ENCODE measurements at regions of chr11 and their contacts with region 1.

Region 1: GRCh38 chr11:108222686-108223448 is at the start of gene ATM:
- DNase-seq: peak; percentile 98
- H3K4me3 Mint-ChIP-seq: no peak within 1 kb of the TSS
- H3K27ac Mint-ChIP-seq: no peak within 1 kb of the TSS
- H3K4me1 Mint-ChIP-seq: peaks cover 35% of the 10 kb centered on the region
- H3K27me3 Mint-ChIP-seq: no peaks in the 10 kb centered on the region
- total RNA-seq, gene ATM: 37.3 and 39.7 TPM in 2 replicates

Region 2: DNA sequence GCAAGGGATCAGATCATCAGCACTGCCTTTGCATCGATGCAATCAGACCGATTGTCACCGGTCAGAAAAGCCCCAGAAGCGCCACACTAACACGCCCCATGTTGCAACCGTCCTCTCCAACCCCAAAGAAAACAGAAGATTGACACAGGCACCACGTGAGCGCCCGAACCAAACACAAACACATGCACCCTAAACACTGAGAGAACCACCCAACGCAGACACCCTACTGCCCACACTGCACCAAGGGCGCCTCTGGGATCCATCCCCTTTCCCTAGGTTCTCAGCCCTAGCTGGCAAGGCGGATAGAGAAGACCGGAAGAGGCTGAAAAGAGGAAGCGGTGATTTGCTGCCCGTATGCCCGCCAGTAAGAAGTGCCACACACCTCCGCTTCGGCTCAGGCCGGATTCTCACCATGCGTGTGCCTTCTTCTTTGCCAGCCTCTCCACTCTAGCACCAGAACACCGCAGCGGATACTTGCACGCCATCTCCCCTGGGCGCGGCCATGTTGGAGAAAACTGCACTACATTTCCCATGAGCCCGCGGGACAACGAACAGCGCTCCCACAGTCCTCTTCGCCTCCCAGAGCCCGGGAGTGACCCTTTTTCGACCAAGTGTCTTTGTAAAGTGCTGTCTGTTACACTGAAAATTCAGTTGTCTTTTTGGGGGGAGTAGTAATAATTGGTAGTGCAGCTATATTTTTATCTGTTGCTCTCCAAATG is 657.5 kb before region 1 on chr11 and contains the start of gene ALKBH8:
- intact Hi-C with region 1: loop called (anchors 10 kb)
- DNase-seq: peak; percentile 71
- H3K4me3 Mint-ChIP-seq: peak within 1 kb of the TSS; percentile 99
- H3K27ac Mint-ChIP-seq: peak within 1 kb of the TSS; percentile 98
- H3K4me1 Mint-ChIP-seq: peaks cover 52% of the 10 kb centered on the region
- H3K27me3 Mint-ChIP-seq: no peaks in the 10 kb centered on the region
- total RNA-seq, gene ALKBH8: 14.7 and 16.0 TPM in 2 replicates

Region 3: DNA sequence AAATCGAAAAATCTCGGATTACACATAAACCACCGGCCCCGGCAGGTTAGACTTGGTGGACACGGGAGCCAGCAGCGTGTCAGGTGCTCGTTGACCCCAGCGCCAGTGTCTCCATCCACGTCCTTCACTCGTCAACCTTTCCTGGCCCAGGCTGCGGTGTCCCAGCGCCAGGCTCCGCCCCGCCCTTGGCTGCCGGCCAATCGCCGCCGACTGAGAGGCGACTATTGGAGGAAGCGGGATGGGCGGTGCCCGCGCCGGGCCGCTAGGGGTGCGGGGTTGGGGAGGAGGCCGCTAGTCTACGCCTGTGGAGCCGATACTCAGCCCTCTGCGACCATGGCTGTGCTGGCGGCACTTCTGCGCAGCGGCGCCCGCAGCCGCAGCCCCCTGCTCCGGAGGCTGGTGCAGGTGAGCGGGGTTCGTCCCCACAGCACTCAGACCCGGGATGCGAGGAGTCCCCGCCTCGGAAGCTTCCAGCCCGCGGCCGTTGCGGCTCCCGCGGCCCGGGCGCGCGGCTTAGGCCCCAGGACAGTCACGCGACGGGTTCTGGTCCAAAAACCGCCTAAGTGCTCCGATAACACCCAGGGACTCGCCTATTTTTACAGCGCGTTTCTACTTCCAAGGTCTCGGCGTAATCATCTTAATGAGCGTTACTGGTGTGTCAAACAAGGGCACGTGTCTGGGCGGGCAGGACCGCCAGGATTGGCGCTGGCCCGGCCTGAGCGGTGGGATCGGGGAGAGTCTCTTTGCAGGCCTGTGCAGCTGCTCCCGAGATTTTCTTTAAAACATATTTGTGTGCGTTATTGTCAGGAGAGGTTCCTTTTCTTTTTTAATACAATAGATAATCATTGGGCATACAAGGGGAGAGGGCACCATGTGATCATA is 101.4 kb before region 1 on chr11 and contains the start of gene ACAT1:
- intact Hi-C with region 1: loop called (anchors 1 kb)
- DNase-seq: peak; percentile 95
- H3K4me3 Mint-ChIP-seq: peak within 1 kb of the TSS; percentile 97
- H3K27ac Mint-ChIP-seq: peak within 1 kb of the TSS; percentile 82
- H3K4me1 Mint-ChIP-seq: peaks cover 36% of the 10 kb centered on the region
- H3K27me3 Mint-ChIP-seq: no peaks in the 10 kb centered on the region
- total RNA-seq, gene ACAT1: 52.8 and 56.8 TPM in 2 replicates

Region 4: DNA sequence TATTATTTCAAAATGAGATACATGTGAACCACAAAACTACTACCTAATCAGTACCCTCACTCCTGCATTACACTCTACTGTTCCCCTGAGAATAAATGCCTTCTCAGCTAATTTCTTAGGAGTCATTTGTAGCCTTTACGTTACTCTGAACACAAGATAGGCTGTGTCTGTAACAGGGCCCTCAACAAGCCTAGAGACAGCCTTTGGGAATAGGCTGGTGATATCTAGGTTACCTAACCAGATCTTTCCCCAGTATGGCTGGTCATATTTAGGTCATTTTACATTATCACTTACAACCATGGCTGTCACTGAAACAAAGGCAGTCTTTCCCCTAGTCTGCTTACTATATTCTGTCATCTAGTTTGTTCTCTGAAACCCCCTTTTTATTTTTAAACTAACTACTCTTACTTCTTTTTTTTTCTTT is 14.2 kb after region 1 on chr11:
- intact Hi-C with region 1: loop called (anchors 1 kb)
- DNase-seq: no peak
- H3K4me3 Mint-ChIP-seq: peak overlapping the region; percentile 68
- H3K27ac Mint-ChIP-seq: peak overlapping the region; percentile 78
- H3K4me1 Mint-ChIP-seq: peaks cover 60% of the 10 kb centered on the region
- H3K27me3 Mint-ChIP-seq: peaks cover 4% of the 10 kb centered on the region

Region 5: DNA sequence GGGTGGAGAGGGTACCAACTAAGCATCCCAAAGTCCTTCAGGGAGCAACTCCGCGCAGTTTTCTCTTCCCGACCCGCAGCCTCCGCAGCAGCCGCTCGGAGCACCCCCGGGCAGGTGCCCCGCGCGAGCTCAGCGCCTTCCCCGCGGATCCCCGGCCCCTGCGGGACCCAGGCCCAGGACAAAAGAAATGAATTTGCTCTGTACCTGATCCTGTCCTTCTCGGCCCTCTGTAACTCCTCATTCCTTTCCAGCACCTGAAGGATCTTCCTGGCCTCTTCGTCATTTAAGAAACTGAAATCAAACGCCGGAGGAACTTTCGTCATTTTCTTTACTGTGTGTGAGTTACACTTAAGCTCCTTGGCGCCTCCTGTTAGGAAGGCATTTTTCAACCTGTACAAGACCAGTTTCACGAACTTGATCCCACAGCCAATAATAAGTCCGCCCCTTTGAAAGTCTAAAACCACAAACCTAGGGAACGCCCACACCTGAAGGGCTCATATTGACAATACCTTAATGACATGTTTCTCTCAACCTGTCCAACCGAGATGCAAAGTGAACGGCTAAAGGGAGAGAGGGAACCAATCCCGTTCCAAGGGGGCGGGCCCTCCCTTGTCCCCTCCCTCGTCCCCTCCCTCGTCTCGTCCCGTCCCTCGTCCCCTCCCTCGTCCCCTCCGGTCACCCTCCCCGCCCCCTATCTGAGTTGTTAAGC is 370.5 kb after region 1 on chr11 and contains the start of gene EXPH5:
- intact Hi-C with region 1: loop called (anchors 2 kb)
- DNase-seq: peak; percentile 76
- H3K4me3 Mint-ChIP-seq: peak within 1 kb of the TSS; percentile 89
- H3K27ac Mint-ChIP-seq: peak within 1 kb of the TSS; percentile 75
- H3K4me1 Mint-ChIP-seq: peaks cover 23% of the 10 kb centered on the region
- H3K27me3 Mint-ChIP-seq: peaks cover 29% of the 10 kb centered on the region
- total RNA-seq, gene EXPH5: 0.56 and 0.65 TPM in 2 replicates

Region 6: GRCh38 chr11:108733479-108734116 is 510.7 kb after region 1 on chr11:
- intact Hi-C with region 1: loop called (anchors 1 kb)
- DNase-seq: peak; percentile 25
- H3K4me3 Mint-ChIP-seq: peak overlapping the region; percentile 55
- H3K27ac Mint-ChIP-seq: peak overlapping the region; percentile 88
- H3K4me1 Mint-ChIP-seq: peaks cover 44% of the 10 kb centered on the region
- H3K27me3 Mint-ChIP-seq: no peaks in the 10 kb centered on the region

Measured in activated T-helper 1 cell treated with anti-CD3 and anti-CD28 coated beads, Interleukin-12 subunit alpha, Interleukin-12 subunit beta, Interleukin-2, Interleukin-4 antibody, amounts not matched to agents 30 ng/mL and 10 ng/mL and 1 ng/mL, durations not matched to agents 14 hours and 24 hours and 36 hours (primary cell).